ENCODE measurements at regions of chr17 and their contacts with region 1.

Region 1: DNA sequence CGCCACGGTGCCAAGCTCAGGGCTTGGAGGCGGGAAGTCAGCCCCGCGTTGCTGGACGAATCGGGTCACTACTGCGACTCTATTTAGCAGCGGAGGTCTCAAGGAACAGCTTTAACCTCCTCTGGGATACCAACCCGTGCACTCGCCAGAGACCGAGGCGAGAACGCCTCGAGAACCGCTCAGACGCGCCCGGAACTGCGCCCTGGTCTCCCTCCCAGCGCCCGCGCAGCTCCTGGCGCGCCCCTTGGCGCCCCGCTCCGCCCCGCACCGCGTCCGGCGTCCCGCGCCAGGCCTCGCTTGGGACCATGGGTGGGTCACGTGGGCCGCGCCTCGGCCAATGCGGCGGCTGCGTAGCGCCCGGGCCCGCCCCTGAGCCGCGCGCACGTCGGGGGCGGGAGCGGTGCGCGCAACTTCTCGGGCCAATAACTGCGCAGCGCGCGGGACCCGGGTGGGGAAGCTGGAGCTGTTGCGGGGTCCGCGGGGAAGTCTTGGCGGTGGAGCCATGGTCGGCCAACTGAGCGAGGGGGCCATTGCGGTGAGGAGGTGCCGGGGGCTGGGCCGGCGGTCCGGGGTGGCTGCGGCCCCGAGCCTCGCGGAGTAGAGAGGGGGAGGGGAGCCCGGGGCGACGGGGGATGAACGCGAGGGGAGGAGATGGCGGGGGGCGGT is at the starts of genes RPA1 and SMYD4:
- DNase-seq: peak; percentile 95
- ATAC-seq: peak; percentile 98
- H3K4me3 Mint-ChIP-seq: peak within 1 kb of the TSS; percentile 98
- H3K27ac Mint-ChIP-seq: peak within 1 kb of the TSS; percentile 93
- H3K4me1 Mint-ChIP-seq: peaks cover 59% of the 10 kb centered on the region
- H3K27me3 Mint-ChIP-seq: no peaks in the 10 kb centered on the region
- total RNA-seq, gene RPA1: 134 to 191 TPM
- total RNA-seq, gene SMYD4: 19.7 to 19.8 TPM

Region 2: GRCh38 chr17:1399679-1400512 is 429.8 kb before region 1 on chr17 and contains the start of gene YWHAE:
- CTCF ChIA-PET with region 1: no interaction called
- POLR2A ChIA-PET with region 1: no interaction called
- intact Hi-C with region 1: loop called in 1 of 2 experiments (anchors 2 kb)
- DNase-seq: peak; percentile 99
- ATAC-seq: peak; percentile 95
- H3K4me3 Mint-ChIP-seq: peak within 1 kb of the TSS; percentile 100
- H3K27ac Mint-ChIP-seq: peak within 1 kb of the TSS; percentile 100
- H3K4me1 Mint-ChIP-seq: peaks cover 27% of the 10 kb centered on the region
- H3K27me3 Mint-ChIP-seq: no peaks in the 10 kb centered on the region
- total RNA-seq, gene YWHAE: 520 to 553 TPM

Region 3: GRCh38 chr17:1648963-1649843 is 180.5 kb before region 1 on chr17:
- CTCF ChIA-PET with region 1: interaction called, 4 read pairs
- POLR2A ChIA-PET with region 1: no interaction called
- intact Hi-C with region 1: loop called in 1 of 2 experiments (anchors 1 kb)
- DNase-seq: peak; percentile 97
- ATAC-seq: peak; percentile 74
- H3K4me3 Mint-ChIP-seq: peak overlapping the region; percentile 43
- H3K27ac Mint-ChIP-seq: no peak overlapping the region
- H3K4me1 Mint-ChIP-seq: peaks cover 25% of the 10 kb centered on the region
- H3K27me3 Mint-ChIP-seq: no peaks in the 10 kb centered on the region

Region 4: GRCh38 chr17:2029911-2030778 is 200.4 kb after region 1 on chr17 and contains the start of gene DPH1:
- CTCF ChIA-PET with region 1: no interaction called
- POLR2A ChIA-PET with region 1: no interaction called
- intact Hi-C with region 1: loop called in 1 of 2 experiments (anchors 1 kb)
- DNase-seq: peak; percentile 94
- ATAC-seq: peak; percentile 91
- H3K4me3 Mint-ChIP-seq: peak within 1 kb of the TSS; percentile 88
- H3K27ac Mint-ChIP-seq: peak within 1 kb of the TSS; percentile 78
- H3K4me1 Mint-ChIP-seq: peaks cover 24% of the 10 kb centered on the region
- H3K27me3 Mint-ChIP-seq: peaks cover 20% of the 10 kb centered on the region
- total RNA-seq, gene DPH1: 29.1 to 37.0 TPM

Region 5: GRCh38 chr17:2303204-2304188 is 473.8 kb after region 1 on chr17 and contains the starts of genes SMG6 and SRR:
- CTCF ChIA-PET with region 1: no interaction called
- POLR2A ChIA-PET with region 1: no interaction called
- intact Hi-C with region 1: loop called in 1 of 2 experiments (anchors 10 kb)
- DNase-seq: peak; percentile 98
- ATAC-seq: peak; percentile 89
- H3K4me3 Mint-ChIP-seq: peak within 1 kb of the TSS; percentile 81
- H3K27ac Mint-ChIP-seq: peak within 1 kb of the TSS; percentile 61
- H3K4me1 Mint-ChIP-seq: peaks cover 46% of the 10 kb centered on the region
- H3K27me3 Mint-ChIP-seq: no peaks in the 10 kb centered on the region
- total RNA-seq, gene SMG6: 28.5 to 31.4 TPM
- total RNA-seq, gene SRR: 15.4 to 18.3 TPM

Region 6: DNA sequence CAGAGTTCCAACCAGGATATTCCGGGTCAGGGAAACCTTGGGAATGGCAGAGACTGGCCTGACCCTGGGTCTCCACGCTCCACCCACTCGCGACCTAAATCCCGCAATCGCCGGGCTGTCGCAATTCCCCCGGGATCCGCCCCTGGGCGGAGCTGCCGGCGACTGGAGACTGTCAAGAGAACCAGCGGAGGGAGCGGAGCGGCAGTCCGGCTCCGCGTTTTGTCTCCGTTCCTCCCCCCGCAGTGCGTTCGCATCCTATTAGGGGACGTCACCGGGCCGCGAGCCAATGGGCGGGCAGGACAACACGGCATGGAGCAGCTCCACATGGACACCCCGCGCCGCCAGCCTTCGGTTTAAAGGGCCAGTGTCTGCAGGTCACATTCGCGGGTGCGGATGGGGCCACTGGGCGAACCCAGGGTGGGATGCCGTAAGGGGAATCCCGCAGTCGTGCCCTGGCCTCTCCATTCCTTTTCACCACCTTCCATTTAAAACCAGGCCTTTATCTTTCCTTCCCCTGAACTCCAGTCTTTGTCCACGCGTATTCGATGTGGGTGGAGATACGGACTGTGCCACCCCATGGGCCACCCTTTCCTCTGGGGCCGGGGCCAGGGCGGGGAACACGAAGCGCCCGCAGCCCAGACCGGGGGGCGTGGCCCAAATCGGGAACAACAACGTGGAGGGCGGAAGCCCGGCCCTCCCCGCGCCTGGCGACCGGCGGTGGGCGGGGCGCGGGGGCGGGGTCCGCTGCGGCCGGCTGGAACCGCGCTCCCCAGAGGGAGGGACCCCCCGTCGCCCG is 571.9 kb after region 1 on chr17:
- CTCF ChIA-PET with region 1: no interaction called
- POLR2A ChIA-PET with region 1: no interaction called
- intact Hi-C with region 1: loop called in 1 of 2 experiments (anchors 2 kb)
- DNase-seq: peak; percentile 100
- ATAC-seq: peak; percentile 59
- H3K4me3 Mint-ChIP-seq: peak overlapping the region; percentile 88
- H3K27ac Mint-ChIP-seq: peak overlapping the region; percentile 99
- H3K4me1 Mint-ChIP-seq: peaks cover 43% of the 10 kb centered on the region
- H3K27me3 Mint-ChIP-seq: no peaks in the 10 kb centered on the region

Measured in activated CD4-positive, alpha-beta T cell treated with anti-CD3 and anti-CD28 coated beads for 36 hours (primary cell).